ENCODE measurements at regions of chr2 and their contacts with region 1.

Region 1: DNA sequence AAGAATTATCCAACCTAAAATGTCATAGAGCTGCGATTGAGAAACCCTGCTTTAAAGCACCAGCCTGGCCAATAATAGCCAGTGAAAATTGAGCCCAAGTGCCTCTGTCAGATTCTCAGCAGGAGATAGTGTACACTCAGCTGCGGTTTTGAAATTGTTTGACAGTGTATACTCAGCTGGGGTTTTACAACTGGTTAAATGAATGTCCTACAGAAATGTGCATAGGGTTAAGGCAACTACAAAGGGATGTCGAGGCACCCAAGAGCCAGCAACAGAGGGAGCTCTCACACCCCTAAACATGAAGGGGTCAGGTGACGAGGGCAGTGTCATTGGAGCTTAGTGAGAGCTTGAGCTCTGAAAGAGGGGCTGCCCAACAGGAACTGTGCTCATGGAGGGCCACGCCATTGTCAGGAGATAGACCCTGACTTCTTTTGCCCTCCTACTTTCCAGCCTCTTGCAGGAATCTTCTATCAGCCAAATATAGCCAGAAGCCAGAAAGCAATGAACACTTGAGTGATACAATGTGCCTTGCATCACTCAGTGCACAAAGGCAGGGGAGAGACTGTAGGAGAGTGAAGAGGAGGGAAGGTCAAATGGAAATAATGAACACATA is 15.1 kb downstream of the ACTG2 start:
- DNase-seq: peak in 4 of 5 donors; percentile 52 to 54 (median 53)
- H3K4me3 ChIP-seq: no peak overlapping the region
- H3K4me3 Mint-ChIP-seq: no peak overlapping the region
- H3K27ac ChIP-seq: no peak overlapping the region
- H3K27ac Mint-ChIP-seq: peak overlapping the region in 2 of 7 donors; percentile 62 to 72
- H3K4me1 ChIP-seq: no peaks in the 10 kb centered on the region
- H3K4me1 Mint-ChIP-seq: peaks cover 0 to 2% (median 0%) of the 10 kb centered on the region in 4 donors
- H3K27me3 ChIP-seq: no peaks in the 10 kb centered on the region
- H3K27me3 Mint-ChIP-seq: no peaks in the 10 kb centered on the region

Region 2: GRCh38 chr2:73890301-73891092 is 17.4 kb before region 1 on chr2:
- CTCF ChIA-PET with region 1: no interaction called
- POLR2A ChIA-PET with region 1: no interaction called
- intact Hi-C with region 1: no loop called
- DNase-seq: no peak
- H3K4me3 ChIP-seq: no peak overlapping the region
- H3K4me3 Mint-ChIP-seq: no peak overlapping the region
- H3K27ac ChIP-seq: no peak overlapping the region
- H3K27ac Mint-ChIP-seq: no peak overlapping the region
- H3K4me1 ChIP-seq: no peaks in the 10 kb centered on the region
- H3K4me1 Mint-ChIP-seq: peaks cover 0 to 4% (median 2%) of the 10 kb centered on the region in 4 donors
- H3K27me3 ChIP-seq: no peaks in the 10 kb centered on the region
- H3K27me3 Mint-ChIP-seq: peaks cover 0 to 4% of the 10 kb centered on the region in 2 donors

Region 3: DNA sequence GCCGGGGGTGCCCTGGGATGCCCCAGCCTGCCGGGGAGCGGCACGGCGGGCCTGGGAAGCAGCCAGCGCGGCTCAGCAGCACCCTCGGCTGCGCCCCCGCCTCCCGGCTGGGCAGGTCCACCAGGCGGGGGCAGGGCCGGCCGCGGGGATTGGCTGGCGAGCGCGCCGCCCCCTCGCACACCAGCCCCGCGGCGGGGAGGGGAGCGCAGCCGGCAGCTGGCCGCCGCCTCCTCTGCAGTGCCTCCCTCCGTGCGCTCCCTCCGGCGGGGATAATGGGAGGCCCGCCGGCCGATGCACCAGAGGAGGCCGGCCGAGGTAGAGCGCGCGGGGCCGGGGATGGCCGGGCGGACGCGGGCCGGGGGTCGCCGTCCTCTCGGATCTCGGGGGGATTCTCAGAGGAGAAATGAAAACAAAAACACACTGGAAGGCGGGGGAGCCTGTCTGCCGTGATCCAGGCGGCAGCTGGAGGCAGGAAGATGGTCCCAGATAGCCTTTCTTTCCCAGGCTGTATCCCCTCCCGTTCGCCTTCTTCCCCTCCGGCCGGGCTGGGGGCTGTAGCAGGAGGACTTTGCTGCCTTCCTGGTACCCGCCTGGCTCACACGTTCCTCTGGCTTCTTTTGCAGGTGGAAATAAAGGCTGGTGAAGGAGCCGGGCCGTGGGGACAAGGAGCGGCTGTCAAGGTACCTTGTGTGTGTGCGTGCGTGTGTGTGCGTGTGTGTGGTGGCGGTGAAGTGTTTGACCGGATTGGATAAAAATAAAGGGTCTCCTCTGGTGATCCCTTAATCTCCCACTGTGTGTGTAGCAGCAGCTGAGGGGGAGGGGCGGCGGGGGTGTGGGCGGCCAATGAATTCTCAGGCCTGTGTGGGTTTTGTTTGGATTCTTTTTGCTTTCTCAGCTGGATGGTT is 94.8 kb after region 1 on chr2:
- CTCF ChIA-PET with region 1: interaction called, 4 read pairs
- POLR2A ChIA-PET with region 1: no interaction called
- intact Hi-C with region 1: loop called (anchors 1 kb)
- DNase-seq: peak; percentile 80 to 85 (median 83)
- H3K4me3 ChIP-seq: peak overlapping the region; percentile 9 to 49
- H3K4me3 Mint-ChIP-seq: peak overlapping the region; percentile 77 to 88 (median 84)
- H3K27ac ChIP-seq: peak overlapping the region; percentile 57
- H3K27ac Mint-ChIP-seq: peak overlapping the region; percentile 2 to 89 (median 85)
- H3K4me1 ChIP-seq: peaks cover 44% of the 10 kb centered on the region
- H3K4me1 Mint-ChIP-seq: peaks cover 32 to 77% (median 47%) of the 10 kb centered on the region in 4 donors
- H3K27me3 ChIP-seq: no peaks in the 10 kb centered on the region
- H3K27me3 Mint-ChIP-seq: no peaks in the 10 kb centered on the region

Region 4: GRCh38 chr2:74052732-74053597 is 145.0 kb after region 1 on chr2:
- CTCF ChIA-PET with region 1: no interaction called
- POLR2A ChIA-PET with region 1: no interaction called
- intact Hi-C with region 1: no loop called
- DNase-seq: peak; percentile 33 to 49 (median 37)
- H3K4me3 ChIP-seq: no peak overlapping the region
- H3K4me3 Mint-ChIP-seq: peak overlapping the region in 7 of 8 donors; percentile 0 to 77 (median 36)
- H3K27ac ChIP-seq: no peak overlapping the region
- H3K27ac Mint-ChIP-seq: peak overlapping the region; percentile 6 to 82 (median 63)
- H3K4me1 ChIP-seq: peaks cover 20% of the 10 kb centered on the region
- H3K4me1 Mint-ChIP-seq: peaks cover 23 to 53% (median 42%) of the 10 kb centered on the region in 4 donors
- H3K27me3 ChIP-seq: no peaks in the 10 kb centered on the region
- H3K27me3 Mint-ChIP-seq: no peaks in the 10 kb centered on the region

Region 5: GRCh38 chr2:74104839-74105238 is 196.9 kb after region 1 on chr2:
- CTCF ChIA-PET with region 1: interaction called, 24 read pairs
- POLR2A ChIA-PET with region 1: no interaction called
- intact Hi-C with region 1: no loop called
- DNase-seq: peak in 2 of 5 donors; percentile 9 to 17
- H3K4me3 ChIP-seq: no peak overlapping the region
- H3K4me3 Mint-ChIP-seq: no peak overlapping the region
- H3K27ac ChIP-seq: no peak overlapping the region
- H3K27ac Mint-ChIP-seq: peak overlapping the region in 3 of 7 donors; percentile 36 to 61 (median 53)
- H3K4me1 ChIP-seq: no peaks in the 10 kb centered on the region
- H3K4me1 Mint-ChIP-seq: no peaks in the 10 kb centered on the region
- H3K27me3 ChIP-seq: no peaks in the 10 kb centered on the region
- H3K27me3 Mint-ChIP-seq: no peaks in the 10 kb centered on the region

Measured in CD4-positive, alpha-beta memory T cell (primary cell).